Colonic mucosa (tissue), 4 donors: ENCODE measurements at regions of chr10 and their contacts with region 1.

Region 1: GRCh38 chr10:101214446-101215396 is 14.5 kb downstream of the LBX1 start:
- DNase-seq: peak; percentile 71
- H3K4me3 ChIP-seq: no peak overlapping the region
- H3K27ac ChIP-seq: no peak overlapping the region
- H3K4me1 ChIP-seq: no peaks in the 10 kb centered on the region
- H3K27me3 ChIP-seq: peaks cover 75% of the 10 kb centered on the region
- CTCF ChIP-seq: peak; percentile 82

Region 2: DNA sequence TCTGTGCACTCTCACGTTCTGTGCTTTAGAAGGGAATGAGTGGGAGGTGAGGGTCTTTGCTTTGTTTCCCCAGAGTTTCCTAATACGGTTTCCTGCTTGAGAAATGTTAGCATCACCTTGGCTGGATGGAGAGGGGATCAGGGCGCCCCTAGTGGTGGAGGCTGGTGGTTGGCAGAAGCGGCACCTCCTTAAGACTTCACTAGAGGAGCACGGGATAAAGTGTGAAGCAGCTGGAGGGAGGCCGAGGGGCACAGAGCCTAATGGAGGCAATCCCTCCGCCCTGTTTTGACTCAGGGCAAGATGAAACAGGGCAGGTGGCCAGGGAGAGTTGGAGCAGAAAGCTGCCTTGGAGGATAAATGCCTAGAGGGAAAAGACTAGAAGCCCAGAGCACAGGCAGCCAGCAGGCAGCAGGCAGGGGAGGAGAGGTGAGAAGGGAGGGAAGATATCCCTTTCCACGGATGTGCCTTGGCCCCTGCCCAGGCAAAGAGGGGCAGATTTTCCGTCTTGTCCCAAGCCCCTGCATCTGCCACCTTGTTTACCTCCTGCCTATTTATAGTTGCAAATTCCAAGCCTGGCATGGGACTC is 83.3 kb after region 1 on chr10:
- intact Hi-C with region 1: loop called (anchors 5 kb)
- DNase-seq: peak; percentile 62
- H3K4me3 ChIP-seq: no peak overlapping the region
- H3K27ac ChIP-seq: no peak overlapping the region
- H3K4me1 ChIP-seq: no peaks in the 10 kb centered on the region
- H3K27me3 ChIP-seq: peaks cover 9% of the 10 kb centered on the region
- CTCF ChIP-seq: peak; percentile 89

Region 3: GRCh38 chr10:101441541-101442455 is 227.1 kb after region 1 on chr10:
- intact Hi-C with region 1: loop called (anchors 5 kb)
- DNase-seq: peak; percentile 24
- H3K4me3 ChIP-seq: no peak overlapping the region
- H3K27ac ChIP-seq: no peak overlapping the region
- H3K4me1 ChIP-seq: no peaks in the 10 kb centered on the region
- H3K27me3 ChIP-seq: no peaks in the 10 kb centered on the region
- CTCF ChIP-seq: peak; percentile 38

Region 4: GRCh38 chr10:101569838-101570766 is 355.4 kb after region 1 on chr10:
- intact Hi-C with region 1: loop called (anchors 2 kb)
- DNase-seq: peak; percentile 82
- H3K4me3 ChIP-seq: peak overlapping the region; percentile 55
- H3K27ac ChIP-seq: no peak overlapping the region
- H3K4me1 ChIP-seq: peaks cover 10% of the 10 kb centered on the region
- H3K27me3 ChIP-seq: peaks cover 36% of the 10 kb centered on the region
- CTCF ChIP-seq: peak; percentile 88

Region 5: DNA sequence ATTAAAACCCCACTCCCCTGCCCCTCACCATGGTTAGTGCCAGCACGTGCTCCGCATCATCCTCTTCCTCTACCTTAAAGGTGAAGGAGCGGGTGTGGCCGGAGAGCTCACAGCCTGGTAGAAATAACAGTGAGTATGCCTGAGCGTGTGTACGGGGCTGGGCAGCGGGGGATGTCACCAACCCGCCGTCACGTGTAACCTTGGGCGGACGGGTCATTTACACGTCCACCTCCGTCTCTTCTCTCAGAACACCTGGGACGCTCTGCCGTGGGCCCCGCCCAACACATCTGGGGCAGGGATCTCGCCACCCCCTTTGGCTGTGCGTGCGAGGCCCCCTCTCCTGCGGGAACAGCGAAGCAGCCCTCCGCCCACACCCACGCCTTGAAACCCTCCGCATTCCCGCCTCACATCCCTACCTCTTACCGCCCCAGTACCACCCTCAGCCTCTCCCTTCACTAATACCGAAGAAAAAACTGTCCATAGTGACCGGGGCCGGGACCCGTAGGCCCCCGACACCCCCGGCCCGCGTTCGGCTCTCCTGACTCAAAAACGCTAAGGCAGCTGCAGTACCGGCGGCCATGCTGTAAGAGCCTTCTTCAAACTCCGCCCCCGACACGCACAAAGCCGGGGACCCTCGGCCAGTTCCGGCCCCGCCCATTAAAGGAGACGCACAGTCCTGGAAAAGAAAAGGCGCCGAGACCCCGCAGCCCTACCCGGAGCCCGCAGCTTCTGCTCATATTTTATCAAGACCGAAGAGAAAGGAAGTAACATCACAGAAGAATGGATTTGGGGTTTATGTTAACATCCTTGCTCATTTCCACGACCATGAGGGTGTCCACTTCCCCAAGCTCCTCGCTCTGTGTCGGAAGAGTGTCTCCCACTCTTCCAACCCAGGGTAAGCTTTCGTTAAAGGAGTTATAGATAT is 568.4 kb after region 1 on chr10 and contains the start of gene NPM3:
- intact Hi-C with region 1: loop called (anchors 10 kb)
- DNase-seq: peak; percentile 91
- H3K4me3 ChIP-seq: peak within 1 kb of the TSS; percentile 54
- H3K27ac ChIP-seq: peak within 1 kb of the TSS; percentile 8
- H3K4me1 ChIP-seq: peaks cover 20% of the 10 kb centered on the region
- H3K27me3 ChIP-seq: no peaks in the 10 kb centered on the region
- CTCF ChIP-seq: no peak
- total RNA-seq, gene NPM3: 14.6 to 73.6 TPM